A673 (cell line): ENCODE measurements at regions of chr9 and their contacts with region 1.

Region 1: DNA sequence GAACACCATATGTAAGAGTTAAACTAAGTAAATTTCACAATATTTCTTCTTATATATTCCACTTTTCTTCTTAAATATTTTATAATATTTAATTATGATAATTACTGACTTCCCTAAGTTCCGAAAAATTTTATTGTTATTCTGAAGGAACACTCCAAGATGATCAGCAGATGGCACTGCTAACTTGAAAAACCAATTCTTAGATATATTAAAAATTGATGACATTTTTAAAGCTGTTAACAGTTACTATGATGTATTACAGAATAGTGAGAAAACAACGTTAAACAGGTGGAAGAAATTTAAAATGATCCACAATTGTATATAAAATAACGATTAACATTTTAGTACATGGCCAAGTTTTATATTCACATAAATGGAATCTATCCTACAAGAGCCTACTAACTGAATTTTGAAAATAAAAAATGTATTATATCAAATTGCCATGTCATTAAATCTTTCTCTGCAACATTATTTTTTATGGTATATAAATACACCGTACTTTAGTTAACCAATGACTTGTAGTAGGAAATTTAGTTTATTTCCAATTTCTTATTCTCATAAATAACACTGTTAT is 30.1 kb upstream of the MUSK start:
- DNase-seq: peak; percentile 64
- H3K4me3 ChIP-seq: no peak overlapping the region
- H3K27ac ChIP-seq: no peak overlapping the region
- H3K4me1 ChIP-seq: peaks cover 17% of the 10 kb centered on the region
- H3K27me3 ChIP-seq: no peaks in the 10 kb centered on the region
- CTCF ChIP-seq: peak; percentile 64

Region 2: DNA sequence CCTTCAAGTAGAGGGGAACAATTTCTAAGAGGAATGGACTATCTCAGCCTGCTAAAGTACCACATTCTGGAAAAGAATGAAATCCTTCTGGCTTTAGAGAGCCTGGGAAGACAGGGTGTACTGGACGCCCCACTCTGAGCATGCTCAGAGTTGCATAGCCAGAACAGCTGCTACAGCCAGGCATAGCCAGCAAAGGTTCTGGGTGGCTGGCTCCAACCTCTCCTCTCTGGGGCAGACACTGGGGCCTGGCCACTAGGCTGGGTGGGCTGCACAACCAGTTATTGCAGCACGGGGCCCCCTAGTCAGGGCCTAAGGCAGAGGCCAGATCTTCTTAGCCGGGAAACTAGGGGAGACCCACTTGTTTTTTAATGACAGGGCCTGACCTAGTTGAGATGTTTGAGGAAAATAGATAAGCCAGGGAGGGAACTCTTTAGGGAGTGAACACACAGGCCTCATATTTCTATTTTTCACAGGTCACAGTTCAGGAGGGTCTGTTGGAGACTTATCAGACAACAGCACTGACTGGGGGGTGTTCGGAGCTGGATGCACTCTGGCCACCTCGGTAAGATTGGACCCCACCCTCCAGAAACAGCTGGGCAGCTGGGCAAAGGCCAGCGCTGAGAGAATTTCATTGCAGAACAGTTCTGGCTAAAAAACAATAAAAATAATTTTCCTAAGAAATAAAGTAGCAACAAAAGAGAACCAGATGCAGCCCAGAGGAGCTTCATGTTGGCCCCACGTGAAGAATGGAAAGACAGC is 256.9 kb after region 1 on chr9:
- CTCF ChIA-PET with region 1: no interaction called
- POLR2A ChIA-PET with region 1: no interaction called
- intact Hi-C with region 1: loop called (anchors 5 kb)
- DNase-seq: no peak
- H3K4me3 ChIP-seq: no peak overlapping the region
- H3K27ac ChIP-seq: no peak overlapping the region
- H3K4me1 ChIP-seq: peaks cover 27% of the 10 kb centered on the region
- H3K27me3 ChIP-seq: no peaks in the 10 kb centered on the region
- CTCF ChIP-seq: no peak

Region 3: GRCh38 chr9:110969971-110970386 is 331.5 kb after region 1 on chr9:
- CTCF ChIA-PET with region 1: no interaction called
- POLR2A ChIA-PET with region 1: no interaction called
- intact Hi-C with region 1: loop called (anchors 5 kb)
- DNase-seq: peak; percentile 67
- H3K4me3 ChIP-seq: no peak overlapping the region
- H3K27ac ChIP-seq: peak overlapping the region; percentile 2
- H3K4me1 ChIP-seq: peaks cover 20% of the 10 kb centered on the region
- H3K27me3 ChIP-seq: no peaks in the 10 kb centered on the region
- CTCF ChIP-seq: no peak

Region 4: GRCh38 chr9:111037381-111038305 is 399.2 kb after region 1 on chr9:
- CTCF ChIA-PET with region 1: interaction called, 11 read pairs
- POLR2A ChIA-PET with region 1: no interaction called
- intact Hi-C with region 1: loop called (anchors 2 kb)
- DNase-seq: peak; percentile 53
- H3K4me3 ChIP-seq: peak overlapping the region; percentile 87
- H3K27ac ChIP-seq: peak overlapping the region; percentile 76
- H3K4me1 ChIP-seq: peaks cover 30% of the 10 kb centered on the region
- H3K27me3 ChIP-seq: no peaks in the 10 kb centered on the region
- CTCF ChIP-seq: peak; percentile 33; the same call in 1 of the 2 replicates

Region 5: DNA sequence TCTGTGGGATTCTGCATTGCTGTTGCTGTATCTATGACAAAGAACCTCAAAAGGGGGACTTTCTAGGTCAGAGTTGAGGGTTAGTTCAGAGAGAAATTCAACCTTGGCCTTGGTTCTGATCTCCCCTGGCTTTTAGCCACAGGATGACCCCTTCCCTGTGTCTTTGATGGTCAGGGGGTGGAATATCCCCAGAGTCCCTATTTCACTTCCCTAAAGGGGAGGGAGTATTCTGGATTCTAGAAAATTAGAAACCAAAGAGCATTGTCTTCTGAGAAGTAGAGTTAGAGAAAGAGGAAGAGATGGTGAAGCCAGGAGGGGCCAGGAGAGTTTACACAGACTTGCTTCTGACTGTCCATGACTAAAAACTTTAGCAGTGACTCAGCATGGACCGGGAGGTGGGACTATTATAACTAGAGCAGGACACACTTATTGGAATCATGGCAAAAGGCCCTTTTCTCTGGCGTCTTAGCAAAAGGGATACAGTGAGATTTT is 456.0 kb after region 1 on chr9:
- CTCF ChIA-PET with region 1: interaction called, 10 read pairs
- POLR2A ChIA-PET with region 1: no interaction called
- intact Hi-C with region 1: no loop called
- DNase-seq: peak; percentile 35
- H3K4me3 ChIP-seq: no peak overlapping the region
- H3K27ac ChIP-seq: no peak overlapping the region
- H3K4me1 ChIP-seq: peaks cover 12% of the 10 kb centered on the region
- H3K27me3 ChIP-seq: no peaks in the 10 kb centered on the region
- CTCF ChIP-seq: no peak

Region 6: DNA sequence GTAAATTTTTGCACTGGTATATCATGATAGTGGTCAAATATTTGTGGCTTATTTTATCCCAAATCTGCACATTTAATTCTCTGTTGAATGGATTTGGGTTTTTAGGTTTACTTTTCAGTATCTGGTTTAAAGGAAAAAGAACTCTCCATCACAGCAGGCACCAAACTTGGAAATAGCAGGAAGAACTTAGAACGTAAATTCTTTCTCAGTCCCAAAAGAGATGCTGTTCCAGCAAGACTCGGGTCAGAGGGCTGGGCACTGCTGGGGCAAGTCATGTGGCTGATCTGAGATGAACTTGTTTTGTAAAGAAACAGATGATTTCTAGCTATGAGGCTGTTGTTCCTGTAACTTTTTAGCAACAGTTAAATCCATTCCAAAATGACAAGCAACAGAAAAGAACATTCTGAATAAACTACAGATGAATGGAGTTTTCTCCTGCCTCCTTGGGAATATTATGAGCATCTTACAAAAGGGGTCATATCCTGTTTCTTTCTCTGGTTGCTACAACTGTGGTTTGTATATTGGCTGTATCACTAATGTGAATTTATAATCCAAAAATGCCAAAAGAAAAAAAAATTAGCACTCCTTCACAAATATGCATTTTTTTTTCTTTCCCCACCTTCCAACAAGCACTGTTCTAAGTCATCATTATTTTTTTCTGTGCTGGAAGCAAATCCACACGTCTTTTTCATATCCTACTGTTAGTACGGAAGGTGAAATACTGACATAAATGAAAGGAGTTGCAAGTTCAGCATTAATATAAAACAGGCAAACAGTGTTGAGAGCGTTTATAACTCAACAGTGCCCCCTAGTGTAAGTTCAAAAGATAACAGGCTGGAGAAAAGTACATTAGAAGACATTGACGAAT is 660.5 kb after region 1 on chr9:
- CTCF ChIA-PET with region 1: no interaction called
- POLR2A ChIA-PET with region 1: no interaction called
- intact Hi-C with region 1: loop called (anchors 1 kb)
- DNase-seq: peak; percentile 76
- H3K4me3 ChIP-seq: peak overlapping the region; percentile 13
- H3K27ac ChIP-seq: peak overlapping the region; percentile 10
- H3K4me1 ChIP-seq: peaks cover 9% of the 10 kb centered on the region
- H3K27me3 ChIP-seq: no peaks in the 10 kb centered on the region
- CTCF ChIP-seq: peak; percentile 79